ENCODE measurements at regions of chr10 and their contacts with region 1.

Region 1: GRCh38 chr10:81514811-81515210 is 360.2 kb upstream of the NRG3 start:
- DNase-seq: no peak
- H3K4me3 ChIP-seq: no peak overlapping the region
- H3K27ac ChIP-seq: no peak overlapping the region
- H3K4me1 ChIP-seq: no peaks in the 10 kb centered on the region
- H3K27me3 ChIP-seq: no peaks in the 10 kb centered on the region
- CTCF ChIP-seq: no peak
- POLR2A ChIP-seq: no peak

Region 2: DNA sequence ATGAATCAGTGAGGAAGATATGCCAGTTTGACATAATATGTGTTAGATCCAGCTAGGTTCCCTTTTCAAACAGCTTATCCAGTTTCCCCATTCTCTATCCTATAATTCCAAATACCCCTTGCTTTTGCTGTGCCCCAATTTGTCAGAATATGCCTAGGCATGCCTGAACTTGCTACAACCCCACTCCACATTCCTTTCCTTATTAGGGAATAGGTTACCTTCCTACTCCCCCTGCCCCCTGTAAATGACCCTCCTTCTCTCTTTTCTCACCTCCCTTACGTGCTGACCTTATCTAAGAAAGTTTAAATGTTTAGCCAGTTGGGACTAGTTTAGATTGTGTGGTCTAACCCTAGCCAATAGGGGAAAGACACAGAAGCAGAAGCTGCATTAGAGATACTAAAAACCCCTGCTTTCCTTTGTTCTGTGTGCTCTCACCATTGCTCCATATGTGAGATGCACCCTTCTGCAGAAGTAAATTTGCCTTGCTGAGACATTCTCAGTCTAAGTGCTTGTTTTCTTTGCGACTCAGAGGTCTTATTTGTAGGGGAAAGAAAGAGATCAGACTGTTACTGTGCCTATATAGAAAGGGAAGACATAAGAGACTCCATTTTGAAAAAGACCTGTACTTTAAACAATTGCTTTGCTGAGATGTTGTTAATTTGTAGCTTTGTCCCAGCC is 709.3 kb before region 1 on chr10:
- intact Hi-C with region 1: no loop called
- DNase-seq: no peak
- H3K4me3 ChIP-seq: no peak overlapping the region
- H3K27ac ChIP-seq: no peak overlapping the region
- H3K4me1 ChIP-seq: no peaks in the 10 kb centered on the region
- H3K27me3 ChIP-seq: no peaks in the 10 kb centered on the region
- CTCF ChIP-seq: no peak
- POLR2A ChIP-seq: no peak

Region 3: DNA sequence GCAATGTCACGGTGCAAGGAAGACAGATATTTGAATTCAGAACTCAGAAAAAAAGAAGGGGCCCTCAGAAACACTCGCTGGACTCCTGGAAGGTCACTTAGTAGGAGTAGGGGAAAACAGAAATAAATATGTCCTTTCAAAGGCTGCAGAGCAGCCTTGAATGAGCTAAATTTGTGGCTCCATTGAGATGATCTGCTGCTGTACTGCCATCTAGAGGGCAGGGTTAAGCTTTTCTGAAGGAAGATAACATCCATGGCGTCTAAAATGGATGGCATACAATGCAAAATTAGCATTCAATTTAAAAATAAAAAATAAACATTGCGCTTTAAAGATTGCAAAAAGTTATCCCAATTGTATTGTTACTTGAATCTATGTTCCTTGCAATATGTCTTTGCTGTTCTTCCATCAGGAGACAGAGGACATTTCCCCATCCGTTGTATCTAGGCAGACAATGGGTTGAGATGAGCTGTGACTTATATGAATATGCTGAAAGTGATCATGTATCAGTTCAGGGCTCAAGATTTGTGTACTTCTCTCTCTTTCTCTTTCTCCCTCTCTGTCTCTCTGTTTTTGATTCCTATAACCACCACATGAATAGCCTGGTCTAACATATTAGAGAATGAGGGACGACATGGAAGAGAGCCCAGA is 334.9 kb before region 1 on chr10:
- intact Hi-C with region 1: no loop called
- DNase-seq: no peak
- H3K4me3 ChIP-seq: no peak overlapping the region
- H3K27ac ChIP-seq: no peak overlapping the region
- H3K4me1 ChIP-seq: no peaks in the 10 kb centered on the region
- H3K27me3 ChIP-seq: no peaks in the 10 kb centered on the region
- CTCF ChIP-seq: peak in 1 of 3 donors; percentile 15
- POLR2A ChIP-seq: no peak

Region 4: DNA sequence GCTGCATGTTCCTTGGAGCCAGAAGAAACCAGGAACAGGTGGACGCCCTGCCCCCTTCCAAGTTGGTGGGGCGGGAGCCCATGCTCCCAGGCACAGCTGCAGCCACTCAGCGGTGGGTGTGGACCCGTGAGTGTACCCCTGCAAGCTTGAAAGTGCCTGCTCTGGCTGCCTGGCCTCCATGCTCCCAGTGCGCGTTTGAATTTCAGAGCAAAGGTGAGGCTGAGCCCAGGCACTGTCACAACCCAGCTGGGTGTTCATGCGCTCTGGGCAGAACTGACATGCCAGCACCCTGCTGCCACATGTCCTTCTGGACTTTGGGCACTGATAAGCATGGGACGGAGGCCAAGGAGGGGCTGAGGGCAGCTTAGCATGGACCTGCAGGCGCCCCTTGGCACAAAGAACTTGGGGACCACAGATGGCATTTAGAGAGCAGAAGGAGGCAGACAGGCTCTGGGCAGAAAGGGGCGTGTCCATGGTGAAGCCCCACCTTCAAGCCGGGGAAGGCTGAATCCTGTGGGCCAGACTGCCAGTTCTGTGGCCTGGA is 41.8 kb before region 1 on chr10:
- intact Hi-C with region 1: loop called (anchors 2 kb)
- DNase-seq: no peak
- H3K4me3 ChIP-seq: no peak overlapping the region
- H3K27ac ChIP-seq: no peak overlapping the region
- H3K4me1 ChIP-seq: no peaks in the 10 kb centered on the region
- H3K27me3 ChIP-seq: no peaks in the 10 kb centered on the region
- CTCF ChIP-seq: no peak
- POLR2A ChIP-seq: no peak

Region 5: GRCh38 chr10:81564143-81564542 is 49.3 kb after region 1 on chr10:
- intact Hi-C with region 1: no loop called
- DNase-seq: no peak
- H3K4me3 ChIP-seq: no peak overlapping the region
- H3K27ac ChIP-seq: no peak overlapping the region
- H3K4me1 ChIP-seq: peaks cover 0 to 4% of the 10 kb centered on the region in 2 donors
- H3K27me3 ChIP-seq: no peaks in the 10 kb centered on the region
- CTCF ChIP-seq: no peak
- POLR2A ChIP-seq: no peak

Measured in breast epithelium (tissue), 4 donors.